Heart right ventricle (tissue), 16 donors: ENCODE measurements at regions of chr10 and their contacts with region 1.

Region 1: GRCh38 chr10:17847585-17848296 is 38.6 kb downstream of the MRC1 start:
- DNase-seq: no peak
- ATAC-seq: peak in 5 of 8 donors; percentile 35 to 51 (median 42)
- H3K4me3 ChIP-seq: no peak overlapping the region
- H3K27ac ChIP-seq: no peak overlapping the region
- H3K4me1 ChIP-seq: peaks cover 0 to 30% (median 0%) of the 10 kb centered on the region in 9 donors
- H3K27me3 ChIP-seq: no peaks in the 10 kb centered on the region
- CTCF ChIP-seq: peak in 8 of 9 donors; percentile 14 to 63 (median 50)

Region 2: GRCh38 chr10:17779784-17780183 is 68.0 kb before region 1 on chr10:
- intact Hi-C with region 1: no loop called
- DNase-seq: no peak
- ATAC-seq: no peak
- H3K4me3 ChIP-seq: no peak overlapping the region
- H3K27ac ChIP-seq: no peak overlapping the region
- H3K4me1 ChIP-seq: peaks cover 0 to 26% (median 12%) of the 10 kb centered on the region in 9 donors
- H3K27me3 ChIP-seq: no peaks in the 10 kb centered on the region
- CTCF ChIP-seq: no peak

Region 3: DNA sequence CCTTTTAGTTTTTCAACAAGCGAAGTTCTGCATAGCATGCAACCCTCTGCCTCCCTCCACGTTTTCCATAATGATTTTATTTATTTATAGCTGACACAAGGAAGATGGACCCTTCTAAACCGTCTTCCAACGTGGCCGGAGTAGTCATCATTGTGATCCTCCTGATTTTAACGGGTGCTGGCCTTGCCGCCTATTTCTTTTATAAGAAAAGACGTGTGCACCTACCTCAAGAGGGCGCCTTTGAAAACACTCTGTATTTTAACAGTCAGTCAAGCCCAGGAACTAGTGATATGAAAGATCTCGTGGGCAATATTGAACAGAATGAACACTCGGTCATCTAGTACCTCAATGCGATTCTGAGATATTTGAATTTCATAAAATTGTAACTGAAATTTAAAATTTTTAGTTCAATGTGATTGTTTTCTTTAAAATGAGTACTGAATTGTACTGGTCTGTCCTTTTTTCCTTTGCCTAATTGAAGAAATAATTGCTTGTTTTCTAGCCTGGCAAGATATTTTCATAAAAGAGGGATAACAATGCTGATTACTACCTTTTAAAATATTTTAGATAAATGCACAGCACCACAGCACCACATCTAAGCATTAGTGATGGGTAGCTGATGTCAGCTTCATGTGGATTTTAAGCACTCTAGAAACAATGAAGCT is 62.5 kb after region 1 on chr10:
- intact Hi-C with region 1: no loop called
- DNase-seq: peak in 1 of 2 donors; percentile 56
- ATAC-seq: peak in 4 of 8 donors; percentile 20 to 65 (median 43)
- H3K4me3 ChIP-seq: no peak overlapping the region
- H3K27ac ChIP-seq: peak overlapping the region in 1 of 10 donors; percentile 3
- H3K4me1 ChIP-seq: peaks cover 0 to 16% (median 7%) of the 10 kb centered on the region in 9 donors
- H3K27me3 ChIP-seq: no peaks in the 10 kb centered on the region
- CTCF ChIP-seq: peak; percentile 23 to 68 (median 58)

Region 4: GRCh38 chr10:18104223-18104872 is 256.6 kb after region 1 on chr10:
- intact Hi-C with region 1: loop called in 2 of 10 experiments (anchors 10 kb)
- DNase-seq: peak; percentile 30 to 50
- ATAC-seq: no peak
- H3K4me3 ChIP-seq: no peak overlapping the region
- H3K27ac ChIP-seq: no peak overlapping the region
- H3K4me1 ChIP-seq: no peaks in the 10 kb centered on the region
- H3K27me3 ChIP-seq: no peaks in the 10 kb centered on the region
- CTCF ChIP-seq: peak; percentile 35 to 78 (median 70)

Region 5: DNA sequence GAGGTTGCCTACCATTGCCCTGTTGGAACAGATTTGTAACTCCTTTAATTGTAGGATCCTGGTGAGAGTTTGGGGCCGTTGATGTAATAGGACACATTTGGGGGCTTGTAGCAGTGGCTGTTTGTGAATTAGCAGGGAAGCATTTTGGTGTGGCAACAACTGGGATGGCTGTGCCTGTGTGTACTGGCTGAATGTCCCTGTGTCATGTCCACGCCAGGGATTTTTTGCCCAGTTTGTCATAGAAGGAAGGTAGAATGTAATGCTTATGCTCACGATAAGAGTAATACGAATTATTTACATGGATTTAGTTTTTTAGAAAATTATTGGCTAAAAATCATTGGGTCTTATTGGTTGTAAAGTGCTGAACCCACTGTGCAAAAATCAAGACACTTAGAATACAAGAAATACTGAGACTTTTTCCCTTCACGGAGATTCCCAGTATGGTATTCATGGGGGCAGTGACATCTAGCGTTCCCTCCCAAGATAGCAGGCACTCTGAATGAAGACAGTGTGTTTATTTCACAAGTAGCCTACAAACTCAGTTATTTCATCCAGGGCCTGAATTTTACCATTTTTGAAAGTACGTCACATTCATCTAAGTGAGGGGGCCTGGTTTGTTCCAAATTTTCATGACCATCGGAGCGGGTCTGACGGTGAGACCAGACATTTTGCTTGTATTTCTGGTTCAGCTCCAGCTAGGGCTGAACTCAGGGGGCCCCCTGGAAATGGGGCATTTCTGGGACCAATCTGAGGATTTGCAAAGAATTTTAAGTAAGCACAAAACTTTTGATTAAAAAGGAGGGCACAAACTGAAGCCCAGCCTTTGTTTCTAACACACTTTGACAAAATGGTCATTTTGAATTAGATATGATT is 367.2 kb after region 1 on chr10:
- intact Hi-C with region 1: loop called in 9 of 10 experiments (anchors 2 to 5 kb)
- DNase-seq: peak in 1 of 2 donors; percentile 38
- ATAC-seq: peak; percentile 63 to 77 (median 70)
- H3K4me3 ChIP-seq: no peak overlapping the region
- H3K27ac ChIP-seq: no peak overlapping the region
- H3K4me1 ChIP-seq: peaks cover 0 to 35% (median 13%) of the 10 kb centered on the region in 9 donors
- H3K27me3 ChIP-seq: no peaks in the 10 kb centered on the region
- CTCF ChIP-seq: peak; percentile 56 to 91 (median 76)